ENCODE measurements at regions of chr16 and their contacts with region 1.

Region 1: DNA sequence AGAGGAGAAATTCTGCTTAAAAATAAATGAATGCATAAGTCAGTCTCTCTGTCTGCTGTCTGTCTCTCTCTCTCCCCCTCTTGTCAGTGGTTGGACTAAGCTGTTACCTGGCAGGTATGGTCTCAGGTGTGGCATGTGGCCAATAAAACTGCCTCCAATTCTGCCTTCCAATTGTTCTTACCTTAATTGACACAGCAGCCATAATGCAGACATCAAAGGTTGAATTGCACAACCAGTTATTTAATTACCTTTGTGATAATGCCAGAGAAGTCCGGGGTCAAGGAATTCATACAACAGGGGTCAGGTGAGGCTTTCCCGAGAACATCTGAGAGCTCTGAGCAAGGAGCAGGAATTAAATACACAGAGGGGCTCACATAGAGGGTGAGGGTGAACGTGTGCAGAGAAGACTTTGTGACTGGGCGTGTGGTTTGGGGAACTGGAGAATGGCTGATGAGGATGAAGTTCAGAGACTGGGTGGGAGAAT is 78.8 kb upstream of the CDYL2 start:
- DNase-seq: peak; percentile 73 to 82
- H3K4me3 ChIP-seq: no peak overlapping the region
- H3K4me3 Mint-ChIP-seq: no peak overlapping the region
- H3K27ac Mint-ChIP-seq: peak overlapping the region; percentile 20
- H3K4me1 ChIP-seq: peaks cover 25% of the 10 kb centered on the region
- H3K4me1 Mint-ChIP-seq: peaks cover 17% of the 10 kb centered on the region
- H3K27me3 ChIP-seq: no peaks in the 10 kb centered on the region
- H3K27me3 Mint-ChIP-seq: no peaks in the 10 kb centered on the region
- CTCF ChIP-seq: no peak

Region 2: DNA sequence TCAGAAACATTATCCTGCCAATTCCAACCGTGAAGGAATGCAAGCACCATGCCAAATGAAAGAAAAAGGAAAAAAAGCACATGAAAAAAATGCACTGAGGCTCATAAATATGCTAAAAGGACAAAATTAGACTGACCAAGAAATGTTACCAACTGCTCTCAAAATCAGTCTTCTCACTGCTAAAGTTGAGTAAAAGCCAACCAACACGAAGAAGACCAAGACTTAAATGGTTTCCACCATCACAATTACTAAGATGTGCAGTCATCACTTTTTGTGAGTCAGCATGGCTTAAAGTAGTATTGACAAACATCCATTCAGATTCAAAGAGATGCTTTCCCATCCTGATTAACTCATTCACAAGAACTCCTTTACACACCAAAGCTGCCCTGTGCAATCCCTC is 95.2 kb before region 1 on chr16:
- CTCF ChIA-PET with region 1: no interaction called
- POLR2A ChIA-PET with region 1: no interaction called
- intact Hi-C with region 1: no loop called
- DNase-seq: no peak
- H3K4me3 ChIP-seq: no peak overlapping the region
- H3K4me3 Mint-ChIP-seq: no peak overlapping the region
- H3K27ac Mint-ChIP-seq: no peak overlapping the region
- H3K4me1 ChIP-seq: no peaks in the 10 kb centered on the region
- H3K4me1 Mint-ChIP-seq: no peaks in the 10 kb centered on the region
- H3K27me3 ChIP-seq: no peaks in the 10 kb centered on the region
- H3K27me3 Mint-ChIP-seq: peaks cover 8% of the 10 kb centered on the region
- CTCF ChIP-seq: no peak

Region 3: DNA sequence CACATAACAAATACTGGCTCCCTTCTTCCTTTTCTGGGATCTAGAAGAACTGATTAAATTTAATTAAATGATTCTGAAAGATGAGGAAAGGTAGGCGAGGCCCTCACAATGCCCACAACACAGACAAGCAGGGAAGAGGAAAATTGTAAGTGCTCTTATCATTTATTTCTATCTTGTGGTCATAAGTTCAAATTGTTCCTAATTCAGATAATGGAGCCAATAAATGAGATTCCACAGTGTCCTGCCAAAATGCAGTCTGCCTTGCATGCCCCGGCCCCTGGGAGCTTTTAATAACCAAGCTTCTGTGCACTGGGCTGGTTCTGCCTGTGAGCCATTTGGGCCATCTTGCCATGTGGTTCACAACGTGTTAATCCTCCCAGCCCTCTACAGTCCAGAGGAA is 26.5 kb after region 1 on chr16:
- CTCF ChIA-PET with region 1: no interaction called
- POLR2A ChIA-PET with region 1: no interaction called
- intact Hi-C with region 1: loop called (anchors 1 kb)
- DNase-seq: no peak
- H3K4me3 ChIP-seq: no peak overlapping the region
- H3K4me3 Mint-ChIP-seq: no peak overlapping the region
- H3K27ac Mint-ChIP-seq: peak overlapping the region; percentile 71
- H3K4me1 ChIP-seq: peaks cover 25% of the 10 kb centered on the region
- H3K4me1 Mint-ChIP-seq: peaks cover 19% of the 10 kb centered on the region
- H3K27me3 ChIP-seq: no peaks in the 10 kb centered on the region
- H3K27me3 Mint-ChIP-seq: no peaks in the 10 kb centered on the region
- CTCF ChIP-seq: no peak

Measured in Caco-2 (cell line).